Sigmoid colon (tissue), 7 donors: ENCODE measurements at regions of chr7 and their contacts with region 1.

Region 1: GRCh38 chr7:64183126-64183742 is 23.8 kb upstream of the ZNF735 start:
- DNase-seq: no peak
- H3K4me3 ChIP-seq: no peak overlapping the region
- H3K27ac ChIP-seq: no peak overlapping the region
- H3K4me1 ChIP-seq: peaks cover 0 to 14% (median 3%) of the 10 kb centered on the region in 4 donors
- H3K27me3 ChIP-seq: peaks cover 6 to 32% (median 18%) of the 10 kb centered on the region in 3 donors
- CTCF ChIP-seq: peak; percentile 48 to 88 (median 74)
- EP300 ChIP-seq: no peak
- POLR2A ChIP-seq: no peak

Region 2: GRCh38 chr7:64618785-64619456 is 435.7 kb after region 1 on chr7:
- intact Hi-C with region 1: loop called (anchors 1 kb)
- DNase-seq: no peak
- H3K4me3 ChIP-seq: no peak overlapping the region
- H3K27ac ChIP-seq: no peak overlapping the region
- H3K4me1 ChIP-seq: no peaks in the 10 kb centered on the region
- H3K27me3 ChIP-seq: no peaks in the 10 kb centered on the region
- CTCF ChIP-seq: peak; percentile 42 to 79 (median 58)
- EP300 ChIP-seq: no peak
- POLR2A ChIP-seq: no peak